ENCODE measurements at regions of chr10 and their contacts with region 1.

Region 1: DNA sequence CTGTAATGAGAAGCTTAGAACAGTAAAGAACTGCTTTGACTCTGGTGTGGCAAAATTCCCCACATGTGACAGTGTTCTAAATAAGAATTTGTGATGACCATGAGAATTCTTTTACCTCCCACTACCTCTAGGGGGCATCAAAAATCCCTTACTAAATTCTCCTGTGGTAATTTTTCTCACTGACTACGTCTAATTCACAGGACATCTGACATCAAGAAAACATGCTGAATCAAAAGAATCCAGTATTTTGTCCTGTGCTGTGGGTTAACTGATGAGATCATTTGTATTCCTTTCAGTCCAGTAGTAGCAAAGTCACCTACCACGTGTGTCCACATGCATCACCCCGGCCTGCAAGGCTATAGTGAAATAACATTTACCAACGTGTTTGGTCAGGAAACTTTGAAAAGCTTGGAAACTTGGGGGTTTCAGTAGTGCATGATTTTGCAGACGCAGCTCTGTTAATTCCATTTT is 103.8 kb downstream of the ATE1 start:
- DNase-seq: no peak
- H3K4me3 Mint-ChIP-seq: no peak overlapping the region
- H3K27ac Mint-ChIP-seq: no peak overlapping the region
- H3K4me1 Mint-ChIP-seq: peaks cover 2% of the 10 kb centered on the region
- H3K27me3 Mint-ChIP-seq: no peaks in the 10 kb centered on the region

Region 2: GRCh38 chr10:121835376-121835775 is 11.3 kb after region 1 on chr10:
- CTCF ChIA-PET with region 1: interaction called, 10 read pairs
- POLR2A ChIA-PET with region 1: no interaction called
- DNase-seq: no peak
- H3K4me3 Mint-ChIP-seq: no peak overlapping the region
- H3K27ac Mint-ChIP-seq: no peak overlapping the region
- H3K4me1 Mint-ChIP-seq: peaks cover 4% of the 10 kb centered on the region
- H3K27me3 Mint-ChIP-seq: no peaks in the 10 kb centered on the region

Region 3: GRCh38 chr10:121880895-121881294 is 56.9 kb after region 1 on chr10:
- CTCF ChIA-PET with region 1: interaction called, 52 read pairs
- POLR2A ChIA-PET with region 1: no interaction called
- DNase-seq: no peak
- H3K4me3 Mint-ChIP-seq: no peak overlapping the region
- H3K27ac Mint-ChIP-seq: no peak overlapping the region
- H3K4me1 Mint-ChIP-seq: peaks cover 2% of the 10 kb centered on the region
- H3K27me3 Mint-ChIP-seq: no peaks in the 10 kb centered on the region

Region 4: GRCh38 chr10:121886997-121887622 is 63.1 kb after region 1 on chr10:
- CTCF ChIA-PET with region 1: interaction called, 52 read pairs
- POLR2A ChIA-PET with region 1: no interaction called
- DNase-seq: peak; percentile 52
- H3K4me3 Mint-ChIP-seq: no peak overlapping the region
- H3K27ac Mint-ChIP-seq: no peak overlapping the region
- H3K4me1 Mint-ChIP-seq: no peaks in the 10 kb centered on the region
- H3K27me3 Mint-ChIP-seq: no peaks in the 10 kb centered on the region

Region 5: GRCh38 chr10:121900443-121901174 is 76.6 kb after region 1 on chr10:
- CTCF ChIA-PET with region 1: interaction called, 12 read pairs
- POLR2A ChIA-PET with region 1: no interaction called
- DNase-seq: no peak
- H3K4me3 Mint-ChIP-seq: no peak overlapping the region
- H3K27ac Mint-ChIP-seq: no peak overlapping the region
- H3K4me1 Mint-ChIP-seq: peaks cover 3% of the 10 kb centered on the region
- H3K27me3 Mint-ChIP-seq: no peaks in the 10 kb centered on the region

Region 6: DNA sequence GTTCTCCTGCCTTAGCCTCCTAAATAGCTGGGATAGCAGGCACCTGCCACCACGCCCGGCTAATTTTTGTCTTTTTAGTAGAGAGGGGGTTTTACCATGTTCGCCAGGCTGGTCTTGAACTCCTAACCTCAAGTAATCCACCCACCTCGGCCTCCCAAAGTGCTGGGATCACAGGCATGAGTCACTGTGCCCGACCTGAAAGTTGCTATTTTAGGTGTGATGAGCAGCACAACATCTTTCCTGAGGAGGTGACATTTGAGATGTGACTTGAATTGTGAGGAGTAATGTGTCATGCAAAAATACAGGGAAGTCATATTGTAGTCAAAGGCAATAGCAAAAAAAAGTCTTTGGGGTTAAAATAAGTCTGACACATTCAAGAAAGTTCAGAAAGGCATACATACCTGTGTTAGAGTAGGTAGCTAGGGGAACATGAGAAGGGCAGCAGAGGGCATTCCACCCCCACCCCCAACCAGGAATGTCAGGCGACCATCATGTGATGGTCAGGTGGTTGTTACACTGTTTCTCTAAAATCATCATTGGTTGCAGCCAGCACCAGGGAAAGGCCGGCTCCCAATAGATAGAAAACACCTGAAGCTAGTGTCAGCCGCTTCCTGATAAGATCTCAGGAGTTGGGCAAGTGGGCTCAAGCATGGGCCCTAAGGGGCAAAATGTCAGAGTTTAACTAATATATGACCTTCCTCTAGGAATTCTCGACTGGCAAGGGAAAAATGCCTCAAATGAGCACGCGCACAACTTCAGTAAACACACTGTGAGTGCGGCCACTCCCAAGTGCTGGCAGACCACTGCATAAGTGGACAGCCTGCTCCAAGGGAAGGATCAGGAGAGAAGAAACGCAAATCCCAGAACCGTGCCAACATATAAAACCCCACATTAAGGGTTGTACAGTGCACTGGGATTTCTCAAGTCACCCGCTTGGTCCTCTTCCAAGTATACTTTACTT is 164.6 kb after region 1 on chr10 and contains the start of gene TACC2:
- CTCF ChIA-PET with region 1: no interaction called
- POLR2A ChIA-PET with region 1: no interaction called
- DNase-seq: no peak
- H3K4me3 Mint-ChIP-seq: no peak within 1 kb of the TSS
- H3K27ac Mint-ChIP-seq: no peak within 1 kb of the TSS
- H3K4me1 Mint-ChIP-seq: peaks cover 2% of the 10 kb centered on the region
- H3K27me3 Mint-ChIP-seq: peaks cover 7% of the 10 kb centered on the region
- total RNA-seq, gene TACC2: not detected

Measured in activated CD4-positive, alpha-beta memory T cell treated with anti-CD3 and anti-CD28 coated beads, Interleukin-2, amount 10 ng/mL, durations not matched to agents 7 days and 5 days (primary cell).